Activated B cell treated with CpG ODN at 0.5 μM for 24 hours (primary cell): ENCODE measurements at regions of chr2 and their contacts with region 1.

Region 1: GRCh38 chr2:198296665-198297308 is 492.4 kb downstream of the PLCL1 start:
- DNase-seq: no peak
- ATAC-seq: peak; percentile 64
- H3K4me3 Mint-ChIP-seq: no peak overlapping the region
- H3K27ac Mint-ChIP-seq: no peak overlapping the region
- H3K4me1 Mint-ChIP-seq: peaks cover 4% of the 10 kb centered on the region
- H3K27me3 Mint-ChIP-seq: peaks cover 2% of the 10 kb centered on the region
- CTCF ChIP-seq: peak; percentile 83

Region 2: DNA sequence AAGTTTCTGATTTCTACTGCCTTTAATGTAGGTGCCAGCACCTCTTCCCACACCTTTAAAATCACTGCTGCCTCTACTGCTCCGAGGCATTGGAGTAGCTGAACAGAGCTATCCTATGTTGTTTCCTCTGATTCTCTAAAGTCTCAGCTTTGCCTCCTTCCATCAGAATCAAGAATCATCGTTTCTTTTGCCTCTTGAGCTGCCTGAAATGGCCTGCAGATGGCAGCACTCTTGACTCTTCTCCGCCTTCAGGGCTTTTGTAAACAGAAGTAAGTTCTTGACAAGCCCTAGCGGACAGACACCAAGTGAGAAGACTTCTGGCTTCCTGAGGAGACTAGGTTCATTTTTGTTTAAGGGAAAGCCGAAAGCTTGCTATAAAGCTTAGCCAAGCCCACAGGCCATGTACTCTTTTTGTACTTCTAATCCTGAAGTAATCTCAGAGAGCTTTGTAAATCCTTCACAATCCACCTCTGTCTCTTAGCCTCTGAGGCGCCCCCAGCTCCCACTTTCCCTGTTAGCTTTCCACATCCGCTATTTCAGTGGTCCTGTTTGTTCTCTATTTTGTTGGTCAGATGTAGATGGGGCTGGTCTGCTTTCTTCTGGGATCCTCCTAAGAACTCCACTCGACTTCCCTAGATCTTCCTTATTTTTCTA is 1545.7 kb before region 1 on chr2:
- CTCF ChIA-PET with region 1: interaction called, 4 read pairs
- POLR2A ChIA-PET with region 1: no interaction called
- intact Hi-C with region 1: loop called (anchors 5 kb)
- DNase-seq: peak; percentile 26
- ATAC-seq: peak; percentile 86
- H3K4me3 Mint-ChIP-seq: no peak overlapping the region
- H3K27ac Mint-ChIP-seq: no peak overlapping the region
- H3K4me1 Mint-ChIP-seq: peaks cover 5% of the 10 kb centered on the region
- H3K27me3 Mint-ChIP-seq: no peaks in the 10 kb centered on the region
- CTCF ChIP-seq: no peak

Region 3: DNA sequence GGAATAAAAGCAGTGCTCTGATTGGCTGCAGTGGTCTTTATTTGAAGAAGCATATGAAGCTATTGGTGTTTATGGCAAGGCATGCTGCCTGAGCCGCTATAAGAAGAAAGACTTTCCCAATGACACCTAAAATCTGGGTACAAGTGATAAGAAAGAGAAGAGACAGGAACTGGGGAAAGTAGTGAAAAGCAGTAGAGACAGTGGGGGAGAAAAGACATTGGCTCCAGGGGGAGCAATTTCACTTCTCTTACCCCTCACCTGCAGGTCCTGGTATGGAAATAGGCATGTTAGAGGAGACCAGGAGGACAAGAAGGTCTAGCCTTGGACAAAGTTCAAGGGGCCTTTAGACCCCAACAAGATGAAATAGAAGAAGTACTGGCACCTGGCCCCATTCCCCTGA is 445.3 kb before region 1 on chr2:
- CTCF ChIA-PET with region 1: no interaction called
- POLR2A ChIA-PET with region 1: no interaction called
- intact Hi-C with region 1: loop called (anchors 2 kb)
- DNase-seq: no peak
- ATAC-seq: no peak
- H3K4me3 Mint-ChIP-seq: no peak overlapping the region
- H3K27ac Mint-ChIP-seq: no peak overlapping the region
- H3K4me1 Mint-ChIP-seq: no peaks in the 10 kb centered on the region
- H3K27me3 Mint-ChIP-seq: peaks cover 7% of the 10 kb centered on the region
- CTCF ChIP-seq: no peak

Region 4: GRCh38 chr2:198309673-198310280 is 13.0 kb after region 1 on chr2:
- CTCF ChIA-PET with region 1: interaction called, 10 read pairs
- POLR2A ChIA-PET with region 1: no interaction called
- intact Hi-C with region 1: no loop called
- DNase-seq: no peak
- ATAC-seq: peak; percentile 52
- H3K4me3 Mint-ChIP-seq: no peak overlapping the region
- H3K27ac Mint-ChIP-seq: no peak overlapping the region
- H3K4me1 Mint-ChIP-seq: no peaks in the 10 kb centered on the region
- H3K27me3 Mint-ChIP-seq: peaks cover 10% of the 10 kb centered on the region
- CTCF ChIP-seq: no peak